Activated CD4-positive, alpha-beta T cell treated with anti-CD3 and anti-CD28 coated beads, Interleukin-2, amount 10 ng/mL, durations not matched to agents 24 days and 14 days (primary cell): ENCODE measurements at regions of chr12 and their contacts with region 1.

Region 1: GRCh38 chr12:89542912-89543592 is 17.2 kb upstream of the POC1B start:
- DNase-seq: peak; percentile 88
- H3K4me3 Mint-ChIP-seq: no peak overlapping the region
- H3K27ac Mint-ChIP-seq: no peak overlapping the region
- H3K4me1 Mint-ChIP-seq: peaks cover 5% of the 10 kb centered on the region
- H3K27me3 Mint-ChIP-seq: no peaks in the 10 kb centered on the region

Region 2: GRCh38 chr12:89524541-89525285 is 18.3 kb before region 1 on chr12 and contains the start of gene GALNT4:
- intact Hi-C with region 1: no loop called
- DNase-seq: peak; percentile 94
- H3K4me3 Mint-ChIP-seq: peak within 1 kb of the TSS; percentile 98
- H3K27ac Mint-ChIP-seq: peak within 1 kb of the TSS; percentile 99
- H3K4me1 Mint-ChIP-seq: peaks cover 49% of the 10 kb centered on the region
- H3K27me3 Mint-ChIP-seq: no peaks in the 10 kb centered on the region
- total RNA-seq, gene GALNT4: 6.9 and 7.6 TPM in 2 replicates

Region 3: GRCh38 chr12:89556976-89557375 is 13.9 kb after region 1 on chr12:
- intact Hi-C with region 1: no loop called
- DNase-seq: no peak
- H3K4me3 Mint-ChIP-seq: no peak overlapping the region
- H3K27ac Mint-ChIP-seq: no peak overlapping the region
- H3K4me1 Mint-ChIP-seq: no peaks in the 10 kb centered on the region
- H3K27me3 Mint-ChIP-seq: no peaks in the 10 kb centered on the region

Region 4: DNA sequence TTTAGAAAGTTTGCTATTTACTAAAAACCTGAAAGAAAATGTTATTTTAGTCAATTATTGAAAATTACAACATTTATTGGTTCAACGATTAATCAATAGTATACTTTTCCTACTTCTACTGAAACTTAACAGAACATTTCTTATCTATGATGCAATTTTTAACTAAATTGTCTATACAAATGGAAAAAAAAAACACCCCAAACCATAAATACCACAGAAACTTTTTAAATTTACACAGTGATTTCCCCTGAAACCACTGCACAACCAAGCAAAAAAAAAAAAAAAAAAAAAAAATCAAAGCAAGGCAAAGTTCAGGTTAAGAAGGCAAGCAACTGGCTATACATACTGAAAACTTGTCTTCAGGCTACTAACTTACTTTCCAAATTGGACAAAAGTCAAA is 54.7 kb after region 1 on chr12:
- intact Hi-C with region 1: no loop called
- DNase-seq: no peak
- H3K4me3 Mint-ChIP-seq: no peak overlapping the region
- H3K27ac Mint-ChIP-seq: peak overlapping the region; percentile 76
- H3K4me1 Mint-ChIP-seq: peaks cover 13% of the 10 kb centered on the region
- H3K27me3 Mint-ChIP-seq: peaks cover 10% of the 10 kb centered on the region

Region 5: DNA sequence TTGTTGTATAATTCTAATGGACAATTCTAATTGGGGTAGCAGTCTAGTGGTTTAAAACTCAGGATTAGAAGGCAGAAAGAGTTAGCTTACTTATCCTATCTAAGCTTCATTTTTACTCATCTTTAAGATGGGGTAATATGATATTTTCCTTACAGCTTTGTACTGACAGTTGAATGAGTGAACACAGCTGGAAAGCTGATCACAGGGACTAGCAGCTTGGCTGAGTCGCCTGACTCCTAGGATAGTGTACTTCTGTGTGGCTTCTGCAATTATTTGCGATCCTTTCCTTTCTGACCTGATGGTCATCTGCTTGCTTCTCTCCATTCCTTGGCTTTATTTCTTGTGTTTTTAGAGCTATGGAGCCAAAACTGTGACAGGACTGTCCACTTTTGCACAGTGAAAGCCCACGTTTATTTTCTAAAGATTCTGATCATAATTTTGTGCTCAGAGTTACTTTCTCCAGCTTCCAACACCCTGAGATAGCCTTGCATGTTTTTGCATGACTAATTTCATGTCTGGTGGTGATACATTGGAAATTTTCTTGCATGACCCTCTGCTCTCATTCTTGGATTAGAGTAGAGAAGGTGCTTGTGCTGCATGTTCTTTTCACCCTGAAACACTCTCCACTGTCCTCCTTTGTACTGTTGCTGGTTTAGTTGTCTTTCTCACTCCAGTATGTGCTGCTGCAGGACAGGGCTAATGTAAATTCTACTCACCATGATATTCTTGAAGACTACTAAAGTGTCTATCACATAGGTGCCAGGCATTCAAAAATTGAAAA is 542.6 kb after region 1 on chr12:
- intact Hi-C with region 1: loop called (anchors 5 kb)
- DNase-seq: no peak
- H3K4me3 Mint-ChIP-seq: no peak overlapping the region
- H3K27ac Mint-ChIP-seq: no peak overlapping the region
- H3K4me1 Mint-ChIP-seq: peaks cover under 1% of the 10 kb centered on the region
- H3K27me3 Mint-ChIP-seq: peaks cover 2% of the 10 kb centered on the region

Region 6: DNA sequence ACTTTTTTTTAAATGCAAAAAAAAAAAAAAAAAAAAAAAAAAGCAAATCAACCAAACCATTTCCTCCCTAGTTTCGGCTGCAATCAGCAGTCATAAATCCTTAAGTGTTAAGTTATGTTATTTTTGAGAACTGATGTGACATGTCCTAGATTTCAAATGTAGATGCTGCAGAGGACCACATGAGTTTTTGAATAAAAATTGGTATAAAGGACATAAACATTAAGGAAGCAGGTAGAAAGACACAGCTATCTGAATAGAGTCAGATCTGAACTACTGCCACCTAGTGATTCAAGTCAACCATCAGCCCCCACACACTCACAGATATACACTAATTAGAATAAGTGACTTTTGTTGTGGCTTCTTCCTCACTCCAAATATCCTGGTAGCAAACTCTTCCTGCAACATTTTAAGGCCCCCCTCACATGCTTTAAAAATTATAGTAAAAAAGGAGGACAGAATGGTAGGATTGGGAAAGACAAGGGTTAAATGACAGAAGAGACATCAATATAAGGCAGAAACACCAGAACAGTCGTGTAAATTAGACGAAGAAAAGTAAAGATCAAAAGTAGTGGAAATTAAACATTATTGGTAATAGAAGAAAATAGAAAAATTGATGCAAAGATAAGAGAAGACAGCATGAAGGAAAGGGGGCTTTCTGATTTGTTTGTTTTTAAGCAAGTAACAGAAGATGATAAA is 560.1 kb after region 1 on chr12:
- intact Hi-C with region 1: loop called (anchors 1 kb)
- DNase-seq: peak; percentile 64
- H3K4me3 Mint-ChIP-seq: no peak overlapping the region
- H3K27ac Mint-ChIP-seq: no peak overlapping the region
- H3K4me1 Mint-ChIP-seq: peaks cover 5% of the 10 kb centered on the region
- H3K27me3 Mint-ChIP-seq: peaks cover 14% of the 10 kb centered on the region

Region 7: GRCh38 chr12:90253674-90254181 is 710.7 kb after region 1 on chr12:
- intact Hi-C with region 1: loop called (anchors 10 kb)
- DNase-seq: peak; percentile 75
- H3K4me3 Mint-ChIP-seq: no peak overlapping the region
- H3K27ac Mint-ChIP-seq: no peak overlapping the region
- H3K4me1 Mint-ChIP-seq: peaks cover 4% of the 10 kb centered on the region
- H3K27me3 Mint-ChIP-seq: peaks cover 6% of the 10 kb centered on the region

Region 8: DNA sequence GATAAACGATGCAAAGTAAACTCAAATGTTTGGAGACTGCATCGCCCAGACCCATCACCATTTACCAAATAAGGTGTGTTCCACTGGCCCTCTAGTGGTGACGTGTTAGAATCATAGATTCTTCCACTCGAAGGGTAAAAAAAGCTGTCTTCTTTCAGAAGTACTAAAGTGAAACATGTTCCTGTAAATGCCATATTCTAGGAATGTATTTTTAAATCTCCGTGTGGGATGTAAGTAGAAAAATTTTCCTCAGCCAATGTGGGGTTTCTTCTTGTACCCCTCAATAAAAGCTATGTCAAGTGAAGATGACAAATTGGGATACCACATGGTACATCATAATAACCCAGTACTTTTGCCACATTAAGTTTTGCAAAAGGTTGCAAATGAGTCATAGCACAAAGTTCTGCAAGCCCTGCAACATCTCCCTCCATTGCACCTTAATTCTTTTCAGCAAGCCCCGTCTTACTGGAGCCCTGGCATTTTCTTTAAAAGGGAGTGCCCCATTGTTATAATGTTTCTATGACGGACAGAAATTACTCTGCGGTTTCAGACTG is 1311.2 kb after region 1 on chr12:
- intact Hi-C with region 1: loop called (anchors 2 kb)
- DNase-seq: peak; percentile 59
- H3K4me3 Mint-ChIP-seq: no peak overlapping the region
- H3K27ac Mint-ChIP-seq: no peak overlapping the region
- H3K4me1 Mint-ChIP-seq: no peaks in the 10 kb centered on the region
- H3K27me3 Mint-ChIP-seq: no peaks in the 10 kb centered on the region